WTC11 (cell line): ENCODE measurements at regions of chr14 and their contacts with region 1.

Region 1: DNA sequence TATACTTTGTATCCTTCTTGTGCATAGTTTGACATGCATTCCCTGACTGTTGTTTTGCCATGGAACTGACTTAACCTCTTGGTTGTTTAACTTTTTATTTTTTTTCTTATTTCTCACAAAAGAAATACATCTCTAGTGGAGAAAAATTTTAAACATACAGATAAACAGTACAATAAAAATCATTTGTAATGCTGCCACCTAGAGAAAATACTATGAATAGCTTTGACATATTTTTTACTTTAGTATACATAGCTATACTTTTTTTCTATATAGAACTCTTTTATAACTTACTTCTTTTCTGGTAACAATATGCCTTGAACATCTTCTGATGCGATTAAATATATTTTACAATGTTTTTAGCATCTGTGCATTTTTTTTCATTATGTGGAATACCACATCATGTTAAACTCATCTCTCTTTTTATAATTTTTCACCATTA is 184.5 kb downstream of the AKAP6 start:
- DNase-seq: no peak
- ATAC-seq: no peak
- H3K4me3 Mint-ChIP-seq: no peak overlapping the region
- H3K27ac Mint-ChIP-seq: no peak overlapping the region
- H3K4me1 Mint-ChIP-seq: peaks cover 5% of the 10 kb centered on the region; the same call in 1 of the 2 replicates
- H3K27me3 Mint-ChIP-seq: no peaks in the 10 kb centered on the region; the same call in 1 of the 2 replicates
- CTCF ChIP-seq: 0 out of 2 replicates have a peak, but pooled peaks have one; percentile 17

Region 2: DNA sequence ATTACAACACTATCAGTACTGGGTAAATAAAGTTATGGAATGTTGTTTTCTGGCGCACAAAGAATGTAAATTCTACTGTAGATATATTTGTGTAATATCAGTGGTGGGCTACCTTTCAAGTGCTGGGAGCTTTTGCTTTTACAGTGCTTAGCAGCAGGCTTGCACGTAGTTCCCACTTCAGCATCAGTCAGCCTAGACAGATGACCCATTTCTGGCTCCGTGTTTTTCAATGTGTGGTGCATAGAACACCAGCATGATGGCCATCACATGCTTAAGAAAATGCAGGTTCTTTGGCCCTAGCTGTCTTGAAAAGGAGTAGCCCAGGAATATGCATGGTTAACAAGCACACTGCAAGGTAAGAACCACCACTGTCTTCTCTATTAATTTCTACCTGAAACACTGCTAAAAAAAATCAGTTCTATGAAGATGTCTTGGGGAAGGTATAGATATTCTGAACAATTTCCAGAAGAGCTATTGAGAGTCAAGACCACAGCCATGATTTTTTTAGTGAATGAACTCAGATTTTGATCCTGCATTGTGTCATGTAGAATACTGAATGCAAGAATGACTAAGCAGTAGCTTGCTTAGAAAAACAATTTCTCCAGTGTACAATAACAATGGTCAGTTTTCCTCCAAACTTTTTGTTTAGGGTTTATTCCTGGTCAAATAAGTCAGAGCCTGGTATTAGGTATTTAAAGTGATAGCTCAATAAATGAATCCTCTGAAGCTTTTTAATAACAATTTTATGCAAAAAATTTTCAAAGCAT is 11.2 kb after region 1 on chr14:
- CTCF ChIA-PET with region 1: interaction called, 11 read pairs
- POLR2A ChIA-PET with region 1: no interaction called
- DNase-seq: no peak
- ATAC-seq: no peak
- H3K4me3 Mint-ChIP-seq: no peak overlapping the region
- H3K27ac Mint-ChIP-seq: no peak overlapping the region
- H3K4me1 Mint-ChIP-seq: no peaks in the 10 kb centered on the region
- H3K27me3 Mint-ChIP-seq: no peaks in the 10 kb centered on the region; the same call in 1 of the 2 replicates
- CTCF ChIP-seq: no peak